Dorsolateral prefrontal cortex (tissue), 120 donors: ENCODE measurements at regions of chr3 and their contacts with region 1.

Region 1: GRCh38 chr3:72818092-72818773 is 30.0 kb downstream of the SHQ1 start:
- DNase-seq: peak in 1 of 10 donors; percentile 22
- H3K4me3 ChIP-seq: no peak overlapping the region
- H3K27ac ChIP-seq: peak overlapping the region in 17 of 59 donors; percentile 3 to 55 (median 29)
- H3K27me3 ChIP-seq: no peaks in the 10 kb centered on the region
- CTCF ChIP-seq: peak in 55 of 56 donors; percentile 47 to 87 (median 70)

Region 2: GRCh38 chr3:71875461-71875947 is 942.7 kb before region 1 on chr3:
- intact Hi-C with region 1: loop called (anchors 2 to 5 kb)
- DNase-seq: peak; percentile 54 to 88 (median 82)
- H3K4me3 ChIP-seq: no peak overlapping the region
- H3K27ac ChIP-seq: peak overlapping the region in 2 of 59 donors; percentile 5 to 15
- H3K27me3 ChIP-seq: peaks cover 0 to 4% (median 0%) of the 10 kb centered on the region in 45 donors
- CTCF ChIP-seq: peak; percentile 71 to 97 (median 91)

Region 3: DNA sequence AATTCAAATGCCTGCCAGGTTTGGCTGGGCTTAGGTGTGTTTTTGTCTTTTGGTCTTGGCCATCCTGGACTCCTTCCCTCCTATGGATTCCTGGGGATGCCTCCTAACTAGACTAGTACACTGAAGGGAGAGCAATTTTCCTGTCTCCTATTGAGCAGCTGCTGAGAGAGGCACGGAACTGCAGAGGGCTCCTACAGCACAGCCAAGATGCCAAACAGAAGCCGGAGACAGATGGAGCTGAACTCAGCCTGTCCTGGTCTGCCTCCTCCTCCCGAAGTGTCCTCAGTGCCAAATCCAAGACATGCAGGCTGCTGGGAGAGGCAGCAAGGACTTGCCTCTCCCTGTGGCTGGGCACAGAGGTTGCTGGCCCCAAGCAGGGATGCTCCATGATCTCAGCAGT is 776.7 kb before region 1 on chr3:
- intact Hi-C with region 1: loop called in 1 of 2 experiments (anchors 10 kb)
- DNase-seq: peak; percentile 33 to 89 (median 78)
- H3K4me3 ChIP-seq: no peak overlapping the region
- H3K27ac ChIP-seq: peak overlapping the region in 8 of 59 donors; percentile 3 to 40 (median 12)
- H3K27me3 ChIP-seq: no peaks in the 10 kb centered on the region
- CTCF ChIP-seq: peak in 37 of 56 donors; percentile 5 to 50 (median 30)

Region 4: DNA sequence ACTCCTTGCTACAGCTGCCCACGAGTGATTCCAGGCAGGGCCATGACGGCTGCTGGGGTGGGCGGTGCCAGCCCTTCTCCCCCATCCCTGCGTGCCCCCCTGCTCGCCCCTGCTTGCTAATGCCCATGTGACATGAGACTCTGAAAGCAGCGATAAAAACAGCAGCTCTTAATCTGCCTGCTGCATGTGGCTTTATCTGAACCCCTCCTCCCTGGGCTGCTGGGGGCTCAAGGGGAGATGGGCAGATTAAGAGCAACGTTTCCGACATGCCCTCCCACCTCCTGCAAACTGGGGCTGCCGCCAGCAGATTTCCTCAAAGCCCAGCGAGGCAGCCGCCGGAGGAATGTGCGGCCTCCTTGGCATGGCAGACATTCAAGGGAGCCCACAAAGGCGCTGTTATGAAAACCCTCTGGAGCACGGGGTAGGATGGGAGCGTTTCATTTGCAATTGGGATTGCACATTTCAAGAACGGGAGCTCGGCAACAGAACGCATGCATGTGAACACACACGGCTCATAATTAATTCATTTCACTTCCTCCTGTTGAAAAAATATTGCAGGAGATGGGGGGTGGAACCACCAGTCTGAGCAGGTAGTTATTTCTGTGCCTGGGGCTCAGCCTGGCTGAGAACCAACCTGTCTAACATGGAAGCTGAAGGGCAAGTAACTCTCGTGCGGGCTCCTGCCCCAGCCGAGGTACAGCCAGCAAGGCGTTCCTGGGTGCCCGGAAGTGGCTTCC is 529.1 kb before region 1 on chr3:
- intact Hi-C with region 1: loop called in 1 of 2 experiments (anchors 10 kb)
- DNase-seq: peak; percentile 16 to 82 (median 76)
- H3K4me3 ChIP-seq: peak overlapping the region in 58 of 59 donors; percentile 7 to 62 (median 42)
- H3K27ac ChIP-seq: peak overlapping the region in 58 of 59 donors; percentile 18 to 94 (median 82)
- H3K27me3 ChIP-seq: peaks cover 0 to 3% (median 0%) of the 10 kb centered on the region in 45 donors
- CTCF ChIP-seq: peak in 1 of 56 donors; percentile 29

Region 5: DNA sequence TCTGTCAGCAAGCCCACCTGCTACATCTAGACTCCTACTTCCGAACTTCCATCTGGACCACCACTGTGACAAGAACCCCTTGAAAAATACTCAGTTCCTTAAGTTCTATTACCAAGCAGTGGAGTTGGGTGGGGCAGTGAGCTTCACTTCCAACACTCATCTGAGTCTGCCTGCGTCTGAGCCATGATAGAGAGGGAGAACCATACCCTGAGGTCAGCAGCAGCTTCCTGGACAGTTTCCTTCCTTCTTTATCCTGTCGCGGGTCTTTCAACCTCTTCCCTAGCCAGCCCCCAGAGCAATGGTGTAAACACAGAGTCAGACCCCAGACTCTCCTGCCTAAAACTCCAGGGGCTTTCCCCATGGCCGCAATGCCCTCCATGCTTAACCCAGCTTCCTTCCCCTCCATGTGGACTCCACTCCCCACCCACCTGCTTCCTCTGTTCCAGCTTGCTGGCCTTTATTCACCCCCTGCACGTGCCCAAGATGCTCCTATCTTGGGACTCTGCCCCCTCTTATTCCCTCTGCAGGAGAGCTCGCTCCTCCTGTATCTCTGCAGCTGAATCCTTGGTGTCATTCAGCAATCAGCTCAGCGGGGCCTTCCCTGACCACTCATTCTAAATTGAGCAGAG is 181.2 kb before region 1 on chr3:
- intact Hi-C with region 1: no loop called
- DNase-seq: no peak
- H3K4me3 ChIP-seq: no peak overlapping the region
- H3K27ac ChIP-seq: no peak overlapping the region
- H3K27me3 ChIP-seq: peaks cover 0 to 3% (median 0%) of the 10 kb centered on the region in 45 donors
- CTCF ChIP-seq: no peak

Region 6: GRCh38 chr3:72665701-72666443 is 152.4 kb before region 1 on chr3:
- intact Hi-C with region 1: loop called (anchors 2 to 10 kb)
- DNase-seq: no peak
- H3K4me3 ChIP-seq: no peak overlapping the region
- H3K27ac ChIP-seq: peak overlapping the region in 15 of 59 donors; percentile 2 to 99 (median 97)
- H3K27me3 ChIP-seq: peaks cover 0 to 9% (median 0%) of the 10 kb centered on the region in 45 donors
- CTCF ChIP-seq: peak; percentile 17 to 67 (median 52)

Region 7: DNA sequence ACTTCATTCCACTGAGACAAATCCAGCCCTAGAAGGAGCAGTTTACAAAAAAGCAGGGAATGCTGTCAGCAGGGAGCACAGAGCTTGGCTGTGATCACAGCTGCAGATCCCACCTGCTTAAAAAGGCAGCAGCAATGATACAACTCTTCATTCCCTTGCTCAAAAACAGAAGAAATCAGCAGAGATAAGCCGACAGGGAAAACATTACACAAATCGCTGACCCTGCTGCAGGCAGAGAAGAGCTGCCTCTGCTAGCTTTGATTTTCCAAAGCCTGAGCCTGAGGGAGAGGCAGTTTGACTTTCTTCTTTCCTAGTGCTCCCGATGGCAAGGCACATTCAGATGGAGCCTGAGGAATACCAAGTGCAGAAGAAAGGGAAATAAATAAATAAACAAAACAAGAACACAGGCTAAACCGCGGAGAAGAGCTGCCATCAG is 50.2 kb before region 1 on chr3:
- intact Hi-C with region 1: loop called in 1 of 2 experiments (anchors 5 kb)
- DNase-seq: peak in 3 of 10 donors; percentile 7 to 25 (median 9)
- H3K4me3 ChIP-seq: peak overlapping the region in 44 of 59 donors; percentile 5 to 58 (median 28)
- H3K27ac ChIP-seq: peak overlapping the region in 56 of 59 donors; percentile 4 to 87 (median 70)
- H3K27me3 ChIP-seq: no peaks in the 10 kb centered on the region
- CTCF ChIP-seq: no peak